Endothelial cell of umbilical vein (primary cell): ENCODE measurements at regions of chr12 and their contacts with region 1.

Region 1: DNA sequence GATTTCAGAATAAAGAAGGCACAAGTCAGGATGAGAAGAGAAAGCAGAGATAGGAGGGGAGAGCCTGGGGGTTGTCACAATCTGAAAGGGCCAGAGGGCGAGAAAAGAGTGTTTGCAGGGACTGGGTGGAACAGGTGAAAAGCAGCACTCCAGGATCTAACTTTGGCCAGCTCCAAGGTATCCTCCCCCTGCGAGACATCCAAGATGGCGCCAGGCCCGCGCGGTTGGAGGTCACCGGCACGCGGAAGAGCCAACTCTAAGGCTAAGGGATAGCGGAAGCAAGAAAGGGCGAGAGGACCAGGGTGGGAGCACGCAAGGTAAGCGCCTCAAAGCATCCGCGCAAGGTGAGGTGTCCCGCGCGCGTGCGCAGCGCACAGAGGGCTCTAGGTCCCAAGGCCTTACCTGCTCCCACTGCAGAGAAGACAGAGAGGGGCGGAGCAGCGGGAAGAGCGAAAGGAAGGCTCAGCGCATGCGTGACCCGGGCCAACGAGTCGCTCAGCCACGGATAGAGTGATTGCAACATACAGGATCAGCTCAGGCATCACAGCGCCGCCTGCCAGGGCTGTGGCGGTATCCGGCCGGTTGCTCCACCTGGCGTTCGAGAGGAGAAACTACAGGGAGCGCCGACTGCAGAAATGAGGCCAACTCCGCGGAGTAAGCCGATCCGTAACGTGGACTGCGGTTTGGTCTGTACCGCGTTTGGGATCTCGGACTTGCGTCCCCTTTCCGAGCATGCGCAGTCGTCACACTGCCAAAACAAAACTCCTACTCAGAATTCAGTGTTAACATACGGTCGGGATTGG is at the start of gene ATP5MC2:
- DNase-seq: peak; percentile 100
- H3K4me3 ChIP-seq: peak within 1 kb of the TSS; percentile 55 to 86 (median 60)
- H3K27ac ChIP-seq: peak within 1 kb of the TSS; percentile 56
- H3K4me1 ChIP-seq: peaks cover 26% of the 10 kb centered on the region
- H3K27me3 ChIP-seq: no peaks in the 10 kb centered on the region
- CTCF ChIP-seq: peak; percentile 99 to 100
- POLR2A ChIP-seq: peak; percentile 94
- total RNA-seq, gene ATP5MC2: 375 and 402 TPM in 2 replicates

Region 2: DNA sequence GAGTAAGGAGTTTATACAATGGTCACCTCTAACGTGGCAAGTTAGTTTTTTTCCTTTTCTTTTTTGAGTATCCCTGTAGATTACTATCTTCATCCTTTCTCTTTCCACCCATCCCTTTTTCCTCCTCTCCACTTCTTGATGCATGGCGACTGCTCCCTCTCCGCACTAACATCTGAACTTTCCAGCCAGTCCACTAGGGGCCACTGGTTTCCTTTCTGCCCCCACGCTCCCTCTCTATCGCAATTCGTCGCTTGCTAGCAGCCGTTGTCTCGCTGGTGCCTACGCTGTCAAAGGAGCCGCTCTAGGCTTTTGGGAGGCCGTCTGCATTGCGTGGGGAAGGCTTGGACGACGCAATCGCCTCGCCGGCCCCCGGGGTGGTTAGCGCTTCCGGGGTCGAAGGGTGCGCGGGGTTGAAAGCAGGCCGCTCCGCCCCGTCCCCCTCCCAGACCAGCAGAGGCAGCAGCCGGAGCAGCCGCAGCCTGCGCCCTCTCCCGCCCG is 224.1 kb before region 1 on chr12 and contains the start of gene PCBP2:
- CTCF ChIA-PET with region 1: no interaction called
- POLR2A ChIA-PET with region 1: no interaction called
- dilution Hi-C with region 1: no loop called
- intact Hi-C with region 1: loop called (anchors 5 kb)
- DNase-seq: peak; percentile 99
- H3K4me3 ChIP-seq: peak within 1 kb of the TSS; percentile 81 to 100 (median 89)
- H3K27ac ChIP-seq: peak within 1 kb of the TSS; percentile 87
- H3K4me1 ChIP-seq: peaks cover 12% of the 10 kb centered on the region
- H3K27me3 ChIP-seq: no peaks in the 10 kb centered on the region
- CTCF ChIP-seq: peak; percentile 89 to 93
- POLR2A ChIP-seq: no peak
- total RNA-seq, gene PCBP2: 948 and 995 TPM in 2 replicates

Region 3: GRCh38 chr12:53543539-53543938 is 132.3 kb before region 1 on chr12:
- CTCF ChIA-PET with region 1: interaction called, 213 read pairs
- POLR2A ChIA-PET with region 1: interaction called, 3 read pairs
- dilution Hi-C with region 1: no loop called
- intact Hi-C with region 1: loop called (anchors 1 kb)
- DNase-seq: peak; percentile 78
- H3K4me3 ChIP-seq: no peak overlapping the region
- H3K27ac ChIP-seq: peak overlapping the region; percentile 43
- H3K4me1 ChIP-seq: peaks cover 8% of the 10 kb centered on the region
- H3K27me3 ChIP-seq: no peaks in the 10 kb centered on the region
- CTCF ChIP-seq: peak; percentile 79 to 91
- POLR2A ChIP-seq: no peak

Region 4: GRCh38 chr12:53596920-53597363 is 78.9 kb before region 1 on chr12:
- CTCF ChIA-PET with region 1: interaction called, 11 read pairs
- POLR2A ChIA-PET with region 1: no interaction called
- dilution Hi-C with region 1: no loop called
- intact Hi-C with region 1: loop called (anchors 1 kb)
- DNase-seq: peak; percentile 92
- H3K4me3 ChIP-seq: no peak overlapping the region
- H3K27ac ChIP-seq: peak overlapping the region; percentile 54
- H3K4me1 ChIP-seq: peaks cover 40% of the 10 kb centered on the region
- H3K27me3 ChIP-seq: no peaks in the 10 kb centered on the region
- CTCF ChIP-seq: no peak
- POLR2A ChIP-seq: no peak

Region 5: DNA sequence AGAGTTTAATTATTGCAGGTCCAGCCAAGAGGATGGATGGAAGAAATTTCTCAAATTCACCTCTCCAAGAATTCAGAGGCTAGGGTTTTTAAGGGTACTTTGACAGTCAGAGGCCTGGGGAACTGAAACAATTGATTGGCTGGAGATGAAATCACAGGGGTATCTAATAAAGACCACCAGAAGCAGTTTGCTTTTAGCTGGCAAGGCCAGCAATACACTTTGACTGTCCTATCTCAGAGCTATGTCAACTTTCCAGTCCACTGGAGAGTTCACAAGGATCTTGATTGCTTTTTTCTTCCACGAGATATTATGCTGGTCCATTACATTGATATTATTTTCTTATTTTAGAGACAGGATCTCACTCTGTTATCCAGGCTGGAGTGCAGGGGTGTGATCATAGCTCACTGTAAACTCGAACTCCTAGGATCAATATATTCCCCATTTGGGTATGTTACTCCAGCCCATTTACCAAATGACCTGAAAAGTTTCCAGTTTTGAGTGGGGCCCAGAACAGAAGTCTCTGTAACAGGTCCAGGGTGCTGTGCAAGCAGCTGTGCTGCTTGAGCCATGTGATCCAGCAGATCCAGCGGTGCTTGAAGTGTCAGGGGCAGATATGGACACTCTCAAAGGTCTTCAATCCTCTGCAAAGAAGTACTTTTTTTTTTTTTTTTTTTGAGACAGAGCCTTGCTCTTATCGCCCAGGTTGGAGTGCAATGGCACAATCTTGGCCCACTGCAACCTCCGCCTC is 32.4 kb before region 1 on chr12:
- CTCF ChIA-PET with region 1: no interaction called
- POLR2A ChIA-PET with region 1: no interaction called
- dilution Hi-C with region 1: no loop called
- intact Hi-C with region 1: no loop called
- DNase-seq: no peak
- H3K4me3 ChIP-seq: no peak overlapping the region
- H3K27ac ChIP-seq: no peak overlapping the region
- H3K4me1 ChIP-seq: no peaks in the 10 kb centered on the region
- H3K27me3 ChIP-seq: no peaks in the 10 kb centered on the region
- CTCF ChIP-seq: no peak
- POLR2A ChIP-seq: no peak

Region 6: DNA sequence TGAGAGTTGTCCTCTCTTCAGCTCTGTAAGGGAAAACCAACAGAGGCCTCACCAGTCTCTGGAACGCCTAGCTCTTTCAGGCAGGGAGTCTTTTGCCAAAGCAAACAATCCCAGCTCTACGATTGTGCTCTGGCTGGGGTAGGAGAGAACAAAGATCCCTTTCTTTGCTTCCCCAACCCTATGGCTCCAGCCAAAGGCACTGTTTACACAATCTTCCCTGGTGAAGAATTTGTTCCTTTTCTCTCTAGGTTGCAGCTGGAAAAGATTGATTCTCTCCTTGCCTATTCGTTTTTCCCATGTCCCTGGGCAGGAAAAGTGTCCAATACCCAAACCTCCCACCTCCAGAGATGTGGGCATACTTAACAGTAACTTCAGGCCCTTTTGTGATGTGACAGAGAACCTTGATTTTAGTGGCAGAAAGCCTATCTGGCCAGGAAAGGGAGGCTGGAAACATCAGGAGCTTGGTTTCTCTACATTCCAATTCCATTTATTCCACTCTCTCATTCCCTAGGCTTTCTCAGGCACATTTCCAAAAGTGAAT is 16.8 kb before region 1 on chr12:
- CTCF ChIA-PET with region 1: interaction called, 24 read pairs
- POLR2A ChIA-PET with region 1: no interaction called
- dilution Hi-C with region 1: no loop called
- intact Hi-C with region 1: no loop called
- DNase-seq: peak; percentile 90
- H3K4me3 ChIP-seq: no peak overlapping the region
- H3K27ac ChIP-seq: peak overlapping the region; percentile 76
- H3K4me1 ChIP-seq: peaks cover 14% of the 10 kb centered on the region
- H3K27me3 ChIP-seq: no peaks in the 10 kb centered on the region
- CTCF ChIP-seq: no peak
- POLR2A ChIP-seq: no peak

Region 7: DNA sequence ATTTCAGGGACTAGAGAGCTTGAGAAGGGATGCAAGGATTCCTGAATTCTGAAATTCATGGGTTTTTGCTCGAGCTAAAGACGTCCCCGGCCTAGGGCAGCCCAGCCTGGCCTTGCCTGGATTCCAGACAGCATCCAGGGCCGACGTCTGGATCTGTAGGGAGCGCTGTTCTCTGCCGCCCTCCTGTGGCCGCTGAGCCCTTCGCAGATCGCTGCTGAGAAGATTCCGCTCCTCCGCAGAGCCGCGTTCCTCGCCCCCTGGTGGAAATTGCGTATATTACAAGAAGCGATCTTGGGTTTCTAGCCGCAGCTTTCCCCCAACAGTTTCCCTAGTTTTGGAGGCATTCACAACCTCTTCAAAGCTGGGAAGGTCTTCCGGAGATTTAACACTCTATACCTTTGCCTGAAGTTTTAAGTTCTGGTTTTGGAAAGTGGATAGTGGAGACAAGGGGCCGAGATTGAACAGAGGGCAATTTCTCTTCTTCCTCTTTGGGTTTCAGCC is 70.8 kb after region 1 on chr12:
- CTCF ChIA-PET with region 1: interaction called, 19 read pairs
- POLR2A ChIA-PET with region 1: no interaction called
- dilution Hi-C with region 1: no loop called
- intact Hi-C with region 1: no loop called
- DNase-seq: peak; percentile 89
- H3K4me3 ChIP-seq: no peak overlapping the region
- H3K27ac ChIP-seq: no peak overlapping the region
- H3K4me1 ChIP-seq: no peaks in the 10 kb centered on the region
- H3K27me3 ChIP-seq: peaks cover 61 to 89% of the 10 kb centered on the region in 2 experiments
- CTCF ChIP-seq: peak; percentile 100
- POLR2A ChIP-seq: no peak

Region 8: GRCh38 chr12:54159140-54159539 is 483.3 kb after region 1 on chr12:
- CTCF ChIA-PET with region 1: no interaction called
- POLR2A ChIA-PET with region 1: no interaction called
- dilution Hi-C with region 1: no loop called
- intact Hi-C with region 1: no loop called
- DNase-seq: no peak
- H3K4me3 ChIP-seq: no peak overlapping the region
- H3K27ac ChIP-seq: no peak overlapping the region
- H3K4me1 ChIP-seq: no peaks in the 10 kb centered on the region
- H3K27me3 ChIP-seq: peaks cover 13 to 24% of the 10 kb centered on the region in 2 experiments
- CTCF ChIP-seq: no peak
- POLR2A ChIP-seq: no peak